Ascending aorta (tissue), 2 donors: ENCODE measurements at regions of chr5 and their contacts with region 1.

Region 1: GRCh38 chr5:146965761-146966659 is 87.5 kb upstream of the PPP2R2B start:
- DNase-seq: peak; percentile 14 to 83
- H3K4me3 ChIP-seq: no peak overlapping the region
- H3K27ac ChIP-seq: no peak overlapping the region
- H3K4me1 ChIP-seq: peaks cover 3 to 14% of the 10 kb centered on the region in 2 donors
- H3K27me3 ChIP-seq: no peaks in the 10 kb centered on the region
- CTCF ChIP-seq: peak; percentile 66 to 89 (median 86)

Region 2: GRCh38 chr5:146541958-146542849 is 423.8 kb before region 1 on chr5:
- intact Hi-C with region 1: loop called (anchors 1 kb)
- DNase-seq: peak in 1 of 2 donors; percentile 83
- H3K4me3 ChIP-seq: no peak overlapping the region
- H3K27ac ChIP-seq: no peak overlapping the region
- H3K4me1 ChIP-seq: no peaks in the 10 kb centered on the region
- H3K27me3 ChIP-seq: no peaks in the 10 kb centered on the region
- CTCF ChIP-seq: peak; percentile 64 to 93 (median 82)

Region 3: DNA sequence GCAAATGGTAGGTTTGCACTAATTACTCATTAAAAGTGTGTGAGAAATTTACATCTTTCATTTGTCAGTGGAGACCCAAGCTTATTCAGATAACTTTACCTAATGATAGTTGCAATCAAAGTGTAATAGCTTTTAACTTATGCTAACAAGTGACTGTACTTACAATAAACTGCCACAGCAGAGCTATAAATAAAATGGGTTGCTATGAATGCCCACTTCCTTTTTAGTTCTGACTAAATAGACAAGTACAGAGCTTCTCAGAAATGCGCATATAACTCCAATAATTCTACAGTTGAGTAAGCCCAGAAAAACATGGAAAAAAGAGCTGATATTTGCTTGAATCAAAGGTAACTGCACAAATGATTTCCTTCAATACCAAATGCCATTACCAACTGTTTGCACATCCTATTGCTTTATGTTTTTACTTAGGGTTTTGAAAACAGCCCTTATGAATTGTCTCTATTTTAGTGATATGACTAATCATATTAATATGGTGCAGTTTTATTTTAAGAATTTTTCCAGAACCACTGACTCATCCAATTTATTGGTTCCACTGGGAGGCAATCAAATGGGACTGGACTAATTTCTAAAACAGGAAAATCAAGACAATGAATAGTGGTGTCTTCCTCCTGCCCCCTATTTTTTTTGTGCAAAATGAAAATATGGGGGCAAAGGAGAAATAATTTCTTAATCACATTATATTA is 171.5 kb before region 1 on chr5:
- intact Hi-C with region 1: loop called (anchors 10 kb)
- DNase-seq: no peak
- H3K4me3 ChIP-seq: peak overlapping the region in 1 of 2 donors; percentile 17
- H3K27ac ChIP-seq: peak overlapping the region; percentile 50 to 60
- H3K4me1 ChIP-seq: peaks cover 6 to 40% of the 10 kb centered on the region in 2 donors
- H3K27me3 ChIP-seq: no peaks in the 10 kb centered on the region
- CTCF ChIP-seq: no peak

Region 4: DNA sequence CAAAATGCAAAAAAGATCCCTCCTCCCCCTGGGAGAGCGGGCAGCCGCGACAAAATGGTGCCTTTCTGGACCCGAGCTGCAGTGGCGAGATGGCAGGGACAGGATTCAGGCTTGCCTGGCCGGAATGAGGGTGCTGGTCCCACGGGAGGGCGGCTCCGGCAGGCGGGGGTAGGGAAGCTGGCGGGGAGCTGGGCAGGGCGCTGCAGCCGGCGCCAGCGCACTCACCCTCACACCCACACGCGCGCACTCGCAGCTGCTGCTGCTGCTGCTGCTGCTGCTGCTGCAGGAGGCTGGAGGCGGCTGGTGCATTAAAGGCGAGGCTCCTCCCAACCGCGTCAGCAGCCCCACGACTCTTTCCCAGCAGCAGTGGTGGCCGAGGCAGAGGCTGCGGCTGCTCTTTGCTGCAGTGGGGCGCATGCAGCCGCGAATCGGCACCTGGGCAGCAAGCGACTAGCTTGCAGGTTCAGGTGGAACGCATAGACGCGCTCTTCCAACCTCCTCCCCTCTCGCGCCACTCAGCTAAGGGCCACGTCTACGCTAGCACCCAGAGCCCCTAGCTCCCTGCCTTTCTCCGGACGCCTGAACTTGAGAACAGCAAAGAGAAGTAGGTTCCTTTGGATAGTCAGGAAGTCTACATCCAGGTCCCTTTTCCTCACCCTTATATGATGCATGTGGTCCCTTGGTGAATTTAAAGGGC is 87.4 kb before region 1 on chr5 and contains the start of gene PPP2R2B:
- intact Hi-C with region 1: loop called (anchors 5 kb)
- DNase-seq: peak in 1 of 2 donors; percentile 80
- H3K4me3 ChIP-seq: peak within 1 kb of the TSS; percentile 76 to 85
- H3K27ac ChIP-seq: peak within 1 kb of the TSS; percentile 50 to 58
- H3K4me1 ChIP-seq: peaks cover 0 to 11% of the 10 kb centered on the region in 2 donors
- H3K27me3 ChIP-seq: no peaks in the 10 kb centered on the region
- CTCF ChIP-seq: no peak
- total RNA-seq, gene PPP2R2B: 10.0 TPM

Region 5: DNA sequence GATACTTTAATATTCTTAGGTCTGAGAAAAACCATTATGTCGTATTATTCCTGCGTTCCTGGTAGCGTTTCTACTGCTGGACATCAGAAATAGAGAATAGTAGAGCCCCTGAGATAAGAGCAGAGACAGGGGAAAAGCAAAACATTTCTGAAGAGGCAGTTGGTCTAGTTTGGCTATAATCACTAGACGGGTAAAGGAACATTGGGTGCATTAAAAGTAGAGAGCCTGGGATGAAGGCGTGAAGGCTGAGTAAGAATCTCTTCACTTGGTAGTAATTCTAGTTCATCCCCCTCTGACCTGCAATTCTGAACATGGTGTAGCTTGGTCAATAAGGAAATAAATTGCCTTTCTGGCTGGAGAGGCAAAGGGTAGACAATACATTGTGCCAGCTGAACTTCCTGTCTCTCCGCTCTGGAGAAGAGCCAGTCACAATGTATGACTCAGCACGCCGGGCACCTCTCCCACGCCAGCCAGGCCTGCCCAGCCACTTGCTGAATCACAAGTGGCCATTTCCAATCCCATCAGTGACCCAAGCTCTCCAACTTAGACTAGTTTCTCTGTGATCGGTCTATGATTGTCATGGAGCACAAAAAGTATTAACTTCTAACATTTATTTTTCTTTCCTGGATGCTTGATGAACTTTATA is 344.2 kb after region 1 on chr5:
- intact Hi-C with region 1: loop called (anchors 5 kb)
- DNase-seq: peak; percentile 51 to 92
- H3K4me3 ChIP-seq: no peak overlapping the region
- H3K27ac ChIP-seq: peak overlapping the region; percentile 73 to 75
- H3K4me1 ChIP-seq: peaks cover 0 to 16% of the 10 kb centered on the region in 2 donors
- H3K27me3 ChIP-seq: no peaks in the 10 kb centered on the region
- CTCF ChIP-seq: no peak